Activated CD8-positive, alpha-beta T cell treated with anti-CD3 and anti-CD28 coated beads, Interleukin-2, amount 10 ng/mL, durations not matched to agents 7 days and 5 days (primary cell): ENCODE measurements at regions of chr14 and their contacts with region 1.

Region 1: GRCh38 chr14:22519877-22520685 is 68.9 kb downstream of the DAD1 start:
- DNase-seq: no peak
- ATAC-seq: peak; percentile 5
- H3K4me3 Mint-ChIP-seq: peak overlapping the region; percentile 89
- H3K27ac Mint-ChIP-seq: peak overlapping the region; percentile 96
- H3K4me1 Mint-ChIP-seq: peaks cover 92% of the 10 kb centered on the region
- H3K27me3 Mint-ChIP-seq: no peaks in the 10 kb centered on the region

Region 2: GRCh38 chr14:22432348-22432976 is 87.6 kb before region 1 on chr14:
- CTCF ChIA-PET with region 1: no interaction called
- POLR2A ChIA-PET with region 1: no interaction called
- DNase-seq: no peak
- ATAC-seq: no peak
- H3K4me3 Mint-ChIP-seq: no peak overlapping the region
- H3K27ac Mint-ChIP-seq: no peak overlapping the region
- H3K4me1 Mint-ChIP-seq: no peaks in the 10 kb centered on the region
- H3K27me3 Mint-ChIP-seq: no peaks in the 10 kb centered on the region

Region 3: GRCh38 chr14:22491683-22492621 is 28.1 kb before region 1 on chr14:
- CTCF ChIA-PET with region 1: interaction called, 3 read pairs
- POLR2A ChIA-PET with region 1: interaction called, 904 read pairs
- DNase-seq: no peak
- ATAC-seq: no peak
- H3K4me3 Mint-ChIP-seq: peak overlapping the region; percentile 86
- H3K27ac Mint-ChIP-seq: peak overlapping the region; percentile 93
- H3K4me1 Mint-ChIP-seq: peaks cover 8% of the 10 kb centered on the region
- H3K27me3 Mint-ChIP-seq: no peaks in the 10 kb centered on the region

Region 4: DNA sequence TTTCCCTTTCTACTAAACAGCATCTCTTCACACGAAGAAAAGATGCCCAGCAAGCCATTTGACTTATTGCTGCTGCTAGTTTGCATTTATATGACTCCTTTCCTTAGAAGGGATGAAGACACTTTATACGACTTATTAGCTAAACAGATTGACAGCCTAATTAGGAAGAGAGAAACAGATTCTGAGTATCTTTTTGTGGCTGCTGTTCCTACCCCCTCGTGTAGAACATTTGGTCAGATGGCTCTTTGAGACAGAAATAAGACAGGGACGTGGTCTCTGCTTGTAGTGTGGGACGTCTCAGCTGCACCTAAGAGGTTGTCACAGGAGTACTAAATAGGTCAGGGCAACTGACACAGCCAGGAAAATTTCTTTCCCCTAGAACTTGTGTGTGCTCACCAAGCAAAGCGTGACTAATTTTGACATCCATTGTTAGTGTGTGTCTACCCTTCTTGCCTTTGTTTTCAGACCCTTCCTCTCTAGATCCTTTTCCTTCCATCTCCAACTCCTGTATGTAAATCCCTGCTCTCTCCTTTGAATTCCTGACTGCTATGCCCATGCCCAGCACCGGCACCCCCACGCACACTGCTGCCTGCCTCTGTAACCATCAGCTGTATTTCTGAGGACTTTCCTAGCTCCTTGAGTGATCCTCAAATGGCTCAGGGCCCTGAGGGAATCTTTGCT is 14.2 kb before region 1 on chr14:
- CTCF ChIA-PET with region 1: interaction called, 10 read pairs
- POLR2A ChIA-PET with region 1: interaction called, 904 read pairs
- DNase-seq: no peak
- ATAC-seq: peak; percentile 31
- H3K4me3 Mint-ChIP-seq: peak overlapping the region; percentile 84
- H3K27ac Mint-ChIP-seq: peak overlapping the region; percentile 97
- H3K4me1 Mint-ChIP-seq: peaks cover 59% of the 10 kb centered on the region
- H3K27me3 Mint-ChIP-seq: no peaks in the 10 kb centered on the region

Region 5: GRCh38 chr14:22531451-22532344 is 11.6 kb after region 1 on chr14:
- CTCF ChIA-PET with region 1: interaction called, 37 read pairs
- POLR2A ChIA-PET with region 1: interaction called, 904 read pairs
- DNase-seq: peak; percentile 49
- ATAC-seq: peak; percentile 40
- H3K4me3 Mint-ChIP-seq: peak overlapping the region; percentile 76
- H3K27ac Mint-ChIP-seq: peak overlapping the region; percentile 92
- H3K4me1 Mint-ChIP-seq: peaks cover 89% of the 10 kb centered on the region
- H3K27me3 Mint-ChIP-seq: no peaks in the 10 kb centered on the region

Region 6: GRCh38 chr14:22536853-22537338 is 16.8 kb after region 1 on chr14:
- CTCF ChIA-PET with region 1: interaction called, 37 read pairs
- POLR2A ChIA-PET with region 1: interaction called, 904 read pairs
- DNase-seq: peak; percentile 87
- ATAC-seq: peak; percentile 85
- H3K4me3 Mint-ChIP-seq: peak overlapping the region; percentile 76
- H3K27ac Mint-ChIP-seq: peak overlapping the region; percentile 98
- H3K4me1 Mint-ChIP-seq: peaks cover 93% of the 10 kb centered on the region
- H3K27me3 Mint-ChIP-seq: no peaks in the 10 kb centered on the region

Region 7: GRCh38 chr14:22641846-22642245 is 121.8 kb after region 1 on chr14:
- CTCF ChIA-PET with region 1: no interaction called
- POLR2A ChIA-PET with region 1: no interaction called
- DNase-seq: no peak
- ATAC-seq: no peak
- H3K4me3 Mint-ChIP-seq: no peak overlapping the region
- H3K27ac Mint-ChIP-seq: no peak overlapping the region
- H3K4me1 Mint-ChIP-seq: no peaks in the 10 kb centered on the region
- H3K27me3 Mint-ChIP-seq: no peaks in the 10 kb centered on the region

Region 8: GRCh38 chr14:23057757-23058653 is 537.9 kb after region 1 on chr14:
- CTCF ChIA-PET with region 1: no interaction called
- POLR2A ChIA-PET with region 1: no interaction called
- DNase-seq: peak; percentile 91
- ATAC-seq: peak; percentile 76
- H3K4me3 Mint-ChIP-seq: peak overlapping the region; percentile 83
- H3K27ac Mint-ChIP-seq: peak overlapping the region; percentile 34
- H3K4me1 Mint-ChIP-seq: peaks cover 18% of the 10 kb centered on the region
- H3K27me3 Mint-ChIP-seq: peaks cover 9% of the 10 kb centered on the region